ENCODE measurements at regions of chr5 and their contacts with region 1.

Region 1: DNA sequence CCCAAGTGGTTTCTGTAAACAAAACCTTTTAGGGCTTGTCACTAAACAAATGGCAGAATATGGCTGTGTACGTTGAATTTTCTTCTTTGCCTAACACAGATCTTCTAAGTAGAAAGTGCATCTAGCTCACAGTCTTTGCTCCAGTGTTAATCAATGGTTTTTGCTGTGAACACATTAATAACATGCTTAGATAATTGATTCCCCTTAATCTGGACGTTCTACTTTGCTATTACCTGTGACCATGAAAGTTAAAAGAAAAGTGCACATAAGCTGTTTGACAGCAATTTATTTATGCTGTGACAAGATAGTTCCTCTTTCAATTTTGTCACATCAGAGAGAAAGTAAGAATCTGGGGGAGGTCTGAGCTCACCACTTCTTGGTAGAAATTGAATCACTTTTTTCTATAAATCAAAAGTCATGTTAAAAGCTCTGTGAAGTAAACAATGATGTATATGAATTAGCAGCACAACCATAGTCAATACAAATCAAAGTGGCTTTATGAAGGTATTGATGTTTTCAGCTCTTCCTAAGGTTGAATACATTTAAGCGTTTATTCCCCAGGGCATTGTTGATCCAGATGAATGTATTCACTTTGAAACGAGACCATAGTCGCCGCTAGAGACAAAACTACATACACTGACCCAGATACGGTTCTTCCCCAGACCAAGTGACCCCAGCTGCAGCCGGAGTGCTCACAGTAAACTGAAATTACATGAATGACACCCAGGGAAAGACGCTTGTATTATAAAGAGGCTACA is 174.6 kb upstream of the ZNF608 start:
- DNase-seq: no peak
- H3K4me3 Mint-ChIP-seq: no peak overlapping the region
- H3K27ac Mint-ChIP-seq: no peak overlapping the region
- H3K4me1 Mint-ChIP-seq: no peaks in the 10 kb centered on the region
- H3K27me3 Mint-ChIP-seq: no peaks in the 10 kb centered on the region

Region 2: DNA sequence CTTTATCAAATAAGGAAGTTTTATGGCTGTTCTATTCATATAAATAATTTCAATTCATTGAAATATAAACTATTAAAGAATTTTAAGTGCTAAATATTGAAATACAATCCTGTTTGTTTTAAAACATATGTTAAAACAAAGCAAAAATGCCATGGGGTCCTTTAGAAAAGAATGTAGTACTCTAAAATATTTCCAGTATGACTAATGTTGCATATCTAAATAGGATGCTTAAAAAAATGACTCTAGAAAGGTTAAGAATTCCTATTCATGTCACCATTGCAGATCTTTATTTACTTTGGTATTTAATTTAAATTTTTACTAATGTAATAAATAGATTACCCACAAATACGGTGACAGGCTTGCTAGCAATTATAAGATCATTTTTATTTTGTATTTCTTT is 307.0 kb before region 1 on chr5:
- intact Hi-C with region 1: no loop called
- DNase-seq: no peak
- H3K4me3 Mint-ChIP-seq: no peak overlapping the region
- H3K27ac Mint-ChIP-seq: no peak overlapping the region
- H3K4me1 Mint-ChIP-seq: no peaks in the 10 kb centered on the region
- H3K27me3 Mint-ChIP-seq: peaks cover 4% of the 10 kb centered on the region

Region 3: GRCh38 chr5:124935065-124935464 is 14.0 kb after region 1 on chr5:
- intact Hi-C with region 1: loop called (anchors 1 kb)
- DNase-seq: peak; percentile 34
- H3K4me3 Mint-ChIP-seq: no peak overlapping the region
- H3K27ac Mint-ChIP-seq: peak overlapping the region; percentile 47
- H3K4me1 Mint-ChIP-seq: peaks cover 9% of the 10 kb centered on the region
- H3K27me3 Mint-ChIP-seq: no peaks in the 10 kb centered on the region

Region 4: DNA sequence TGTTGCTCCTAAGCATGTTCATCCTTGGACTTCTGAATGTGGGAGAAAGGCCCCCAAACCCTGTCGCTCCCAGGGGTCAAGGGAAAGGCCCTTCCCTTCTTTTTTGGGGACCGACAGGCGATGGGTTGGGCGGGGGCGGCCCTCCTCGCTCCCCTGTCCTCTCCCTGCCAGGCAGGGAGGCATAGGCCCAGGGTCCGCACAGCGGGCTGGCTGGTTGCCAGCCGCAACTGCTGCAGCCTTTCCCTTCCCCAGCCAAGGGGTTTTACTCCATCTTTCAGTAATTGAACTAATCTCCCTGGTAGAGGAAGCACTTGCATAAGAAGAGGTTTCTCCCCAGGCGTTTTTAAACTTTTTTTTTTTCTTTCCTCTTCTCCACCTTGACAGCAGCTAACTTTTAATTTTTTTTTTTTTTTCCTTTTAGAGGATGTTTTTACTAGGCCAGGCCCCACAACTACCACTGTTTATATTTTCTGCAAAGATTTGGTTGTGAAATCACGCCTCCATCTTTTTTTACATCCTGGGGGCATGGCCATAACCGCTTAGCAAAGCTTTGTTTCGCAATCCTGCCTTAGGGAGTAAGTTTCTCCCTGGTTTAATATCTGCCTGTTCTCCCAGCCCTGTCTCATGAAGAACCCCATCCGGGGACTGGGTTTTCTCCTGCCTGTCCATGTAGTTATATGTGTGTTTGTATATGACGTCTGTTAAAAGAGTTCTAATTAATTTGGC is 42.3 kb after region 1 on chr5:
- intact Hi-C with region 1: no loop called
- DNase-seq: no peak
- H3K4me3 Mint-ChIP-seq: no peak overlapping the region
- H3K27ac Mint-ChIP-seq: no peak overlapping the region
- H3K4me1 Mint-ChIP-seq: no peaks in the 10 kb centered on the region
- H3K27me3 Mint-ChIP-seq: no peaks in the 10 kb centered on the region